ENCODE measurements at regions of chr9 and their contacts with region 1.

Region 1: GRCh38 chr9:114681594-114682332 is at the start of gene TEX48:
- DNase-seq: peak; percentile 94
- ATAC-seq: peak; percentile 94
- H3K4me3 Mint-ChIP-seq: peak within 1 kb of the TSS; percentile 7
- H3K27ac Mint-ChIP-seq: peak within 1 kb of the TSS; percentile 85
- H3K4me1 Mint-ChIP-seq: peaks cover 71% of the 10 kb centered on the region
- H3K27me3 Mint-ChIP-seq: no peaks in the 10 kb centered on the region
- total RNA-seq, gene TEX48: 0.61 to 1.7 TPM

Region 2: GRCh38 chr9:114405294-114406034 is 276.3 kb before region 1 on chr9:
- CTCF ChIA-PET with region 1: interaction called, 27 read pairs
- POLR2A ChIA-PET with region 1: no interaction called
- DNase-seq: peak; percentile 90
- ATAC-seq: peak; percentile 98
- H3K4me3 Mint-ChIP-seq: no peak overlapping the region
- H3K27ac Mint-ChIP-seq: peak overlapping the region; percentile 62
- H3K4me1 Mint-ChIP-seq: peaks cover 14% of the 10 kb centered on the region
- H3K27me3 Mint-ChIP-seq: peaks cover 1% of the 10 kb centered on the region

Region 3: GRCh38 chr9:114706711-114707110 is 24.9 kb after region 1 on chr9:
- CTCF ChIA-PET with region 1: interaction called, 16 read pairs
- POLR2A ChIA-PET with region 1: interaction called, 3 read pairs
- DNase-seq: no peak
- ATAC-seq: no peak
- H3K4me3 Mint-ChIP-seq: no peak overlapping the region
- H3K27ac Mint-ChIP-seq: no peak overlapping the region
- H3K4me1 Mint-ChIP-seq: peaks cover 72% of the 10 kb centered on the region
- H3K27me3 Mint-ChIP-seq: no peaks in the 10 kb centered on the region

Region 4: DNA sequence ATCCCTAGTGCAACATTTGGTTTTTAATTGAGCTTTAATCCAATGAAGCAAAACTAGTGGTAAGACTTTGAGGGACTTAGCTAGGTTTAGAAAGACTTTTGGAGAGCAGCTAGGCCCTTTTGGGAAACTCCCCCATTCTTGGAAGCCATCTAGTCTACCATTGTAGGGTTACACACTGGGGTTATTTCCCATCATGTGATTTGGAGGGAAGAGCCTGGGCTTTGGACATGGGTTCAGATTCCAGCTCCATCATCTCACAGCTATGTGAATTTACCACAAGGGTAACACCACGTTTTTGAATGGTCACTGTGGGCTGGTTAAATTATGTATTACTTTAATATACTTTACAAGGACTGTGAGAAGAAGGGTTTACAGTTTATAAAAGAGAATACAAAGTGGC is 142.3 kb after region 1 on chr9:
- CTCF ChIA-PET with region 1: interaction called, 11 read pairs
- POLR2A ChIA-PET with region 1: no interaction called
- DNase-seq: no peak
- ATAC-seq: no peak
- H3K4me3 Mint-ChIP-seq: no peak overlapping the region
- H3K27ac Mint-ChIP-seq: no peak overlapping the region
- H3K4me1 Mint-ChIP-seq: peaks cover 20% of the 10 kb centered on the region
- H3K27me3 Mint-ChIP-seq: no peaks in the 10 kb centered on the region

Region 5: GRCh38 chr9:114914139-114914538 is 232.4 kb after region 1 on chr9:
- CTCF ChIA-PET with region 1: interaction called, 243 read pairs
- POLR2A ChIA-PET with region 1: interaction called, 3 read pairs
- DNase-seq: no peak
- ATAC-seq: no peak
- H3K4me3 Mint-ChIP-seq: no peak overlapping the region
- H3K27ac Mint-ChIP-seq: peak overlapping the region; percentile 50
- H3K4me1 Mint-ChIP-seq: peaks cover 86% of the 10 kb centered on the region
- H3K27me3 Mint-ChIP-seq: no peaks in the 10 kb centered on the region

Region 6: GRCh38 chr9:115008536-115009270 is 326.9 kb after region 1 on chr9:
- CTCF ChIA-PET with region 1: interaction called, 43 read pairs
- POLR2A ChIA-PET with region 1: no interaction called
- DNase-seq: peak; percentile 34
- ATAC-seq: peak; percentile 49
- H3K4me3 Mint-ChIP-seq: no peak overlapping the region
- H3K27ac Mint-ChIP-seq: no peak overlapping the region
- H3K4me1 Mint-ChIP-seq: peaks cover 61% of the 10 kb centered on the region
- H3K27me3 Mint-ChIP-seq: no peaks in the 10 kb centered on the region